H1 (cell line): ENCODE measurements at regions of chr16 and their contacts with region 1.

Region 1: GRCh38 chr16:4392382-4393239 is 21.0 kb downstream of the VASN start:
- DNase-seq: peak; percentile 59 to 89
- H3K4me3 ChIP-seq: peak overlapping the region in 2 of 4 experiments; percentile 10 to 25; a peak in 2 of 8 replicates
- H3K27ac ChIP-seq: peak overlapping the region; percentile 90
- H3K4me1 ChIP-seq: peaks cover 12 to 50% (median 43%) of the 10 kb centered on the region in 4 experiments
- H3K27me3 ChIP-seq: no peaks in the 10 kb centered on the region
- CTCF ChIP-seq: no peak; a peak in 1 of 4 replicates
- EP300 ChIP-seq: peak; percentile 8 to 91
- POLR2A ChIP-seq: peak in 1 of 2 experiments; percentile 55; a peak in 2 of 3 replicates
- RAD21 ChIP-seq: no peak

Region 2: GRCh38 chr16:4330277-4330874 is 62.2 kb before region 1 on chr16:
- CTCF ChIA-PET with region 1: interaction called, 10 read pairs
- POLR2A ChIA-PET with region 1: interaction called, 5 read pairs
- DNase-seq: peak in 1 of 2 experiments; percentile 91
- H3K4me3 ChIP-seq: no peak overlapping the region
- H3K27ac ChIP-seq: no peak overlapping the region
- H3K4me1 ChIP-seq: peaks cover 5 to 14% (median 10%) of the 10 kb centered on the region in 4 experiments
- H3K27me3 ChIP-seq: no peaks in the 10 kb centered on the region
- CTCF ChIP-seq: peak; percentile 84 to 98 (median 97)
- EP300 ChIP-seq: no peak
- POLR2A ChIP-seq: no peak
- RAD21 ChIP-seq: peak; percentile 86 to 94

Region 3: GRCh38 chr16:4350787-4351659 is 41.6 kb before region 1 on chr16 and contains the start of gene PAM16:
- CTCF ChIA-PET with region 1: interaction called, 17 read pairs
- POLR2A ChIA-PET with region 1: interaction called, 22 read pairs
- DNase-seq: peak; percentile 87 to 100
- H3K4me3 ChIP-seq: peak within 1 kb of the TSS; percentile 91 to 97 (median 96)
- H3K27ac ChIP-seq: peak within 1 kb of the TSS; percentile 85
- H3K4me1 ChIP-seq: peaks cover 0 to 4% (median 0%) of the 10 kb centered on the region in 4 experiments; a peak in 1 of 7 replicates
- H3K27me3 ChIP-seq: peaks cover 0 to 2% (median 0%) of the 10 kb centered on the region in 4 experiments; a peak in 1 of 7 replicates
- CTCF ChIP-seq: no peak
- EP300 ChIP-seq: no peak
- POLR2A ChIP-seq: peak in 1 of 2 experiments; percentile 76; a peak in 2 of 3 replicates
- RAD21 ChIP-seq: no peak
- total RNA-seq, gene PAM16: 78.3 and 84.4 TPM in 2 replicates

Region 4: DNA sequence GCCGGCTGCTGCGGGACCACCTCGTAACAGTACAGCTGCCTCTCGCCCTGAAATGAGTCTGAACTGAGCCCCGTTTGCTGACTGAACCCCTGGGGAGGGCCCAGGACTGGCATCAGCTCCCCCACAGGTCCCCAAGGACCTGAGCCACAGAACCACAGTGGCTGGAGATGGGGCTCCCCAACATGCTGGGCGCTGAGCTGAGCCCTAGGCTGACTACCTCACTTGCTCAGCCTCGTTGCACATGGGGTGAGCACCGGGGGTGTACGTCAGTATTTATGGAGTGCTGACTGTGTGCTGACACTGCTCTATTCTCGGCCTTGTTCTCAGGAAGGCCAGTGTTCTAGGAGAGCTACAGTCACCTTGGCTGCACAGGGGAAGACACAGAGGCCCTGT is 27.6 kb before region 1 on chr16:
- CTCF ChIA-PET with region 1: interaction called, 425 read pairs
- POLR2A ChIA-PET with region 1: interaction called, 14 read pairs
- DNase-seq: no peak
- H3K4me3 ChIP-seq: no peak overlapping the region
- H3K27ac ChIP-seq: no peak overlapping the region
- H3K4me1 ChIP-seq: no peaks in the 10 kb centered on the region; a peak in 1 of 7 replicates
- H3K27me3 ChIP-seq: no peaks in the 10 kb centered on the region; a peak in 1 of 7 replicates
- CTCF ChIP-seq: no peak
- EP300 ChIP-seq: no peak
- POLR2A ChIP-seq: no peak
- RAD21 ChIP-seq: no peak

Region 5: DNA sequence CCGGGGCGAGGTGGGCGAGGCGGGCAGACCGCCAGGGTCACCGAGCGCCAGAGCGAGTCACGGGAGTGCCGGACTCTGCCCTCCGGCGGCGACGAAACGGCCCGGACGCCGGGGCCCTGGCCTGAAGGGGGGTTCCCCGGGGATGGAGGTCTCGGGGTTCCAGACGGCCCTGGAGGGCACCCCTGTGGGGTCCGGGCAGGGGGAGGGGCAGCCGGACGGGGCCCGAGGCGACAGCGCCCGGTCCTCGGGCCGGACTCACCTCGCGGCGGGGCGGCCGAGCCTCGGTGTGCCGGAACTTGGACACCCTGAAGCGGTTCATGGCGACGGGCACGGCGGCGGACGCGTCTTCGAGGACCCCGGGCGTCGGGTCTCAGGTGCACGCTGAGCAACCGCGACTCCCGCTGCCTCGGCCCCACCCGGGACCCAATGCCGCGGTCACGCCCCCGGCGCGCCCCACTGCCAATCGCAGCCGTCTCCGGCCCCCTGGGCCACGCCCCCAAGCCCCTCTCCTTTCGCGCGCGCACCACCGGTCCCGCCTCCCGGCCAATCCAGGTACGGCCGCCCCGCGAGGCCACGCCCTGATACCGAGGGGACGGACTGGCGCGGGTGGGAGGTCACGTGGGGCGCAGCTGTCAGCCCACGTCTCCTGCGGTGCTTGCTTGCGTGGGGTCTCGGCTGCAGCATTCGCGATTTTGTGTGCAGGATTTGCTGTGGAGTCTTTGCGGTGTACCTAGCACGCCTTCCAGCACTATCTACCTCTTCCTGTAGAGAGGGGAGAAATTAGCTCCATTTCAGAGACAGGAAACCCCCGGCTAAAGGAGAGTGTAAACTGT is 23.8 kb after region 1 on chr16 and contains the start of gene CORO7:
- CTCF ChIA-PET with region 1: interaction called, 659 read pairs
- POLR2A ChIA-PET with region 1: interaction called, 16 read pairs
- DNase-seq: peak in 1 of 2 experiments; percentile 97
- H3K4me3 ChIP-seq: peak within 1 kb of the TSS; percentile 53 to 78 (median 64)
- H3K27ac ChIP-seq: no peak within 1 kb of the TSS
- H3K4me1 ChIP-seq: peaks cover 2 to 11% (median 4%) of the 10 kb centered on the region in 4 experiments; a peak in 5 of 7 replicates
- H3K27me3 ChIP-seq: no peaks in the 10 kb centered on the region; a peak in 2 of 7 replicates
- CTCF ChIP-seq: no peak
- EP300 ChIP-seq: no peak
- POLR2A ChIP-seq: peak in 1 of 2 experiments; percentile 24; a peak in 1 of 3 replicates
- RAD21 ChIP-seq: no peak
- total RNA-seq, gene CORO7: 25.8 and 29.8 TPM in 2 replicates